CD14-positive monocyte (primary cell): ENCODE measurements at regions of chr13 and their contacts with region 1.

Region 1: GRCh38 chr13:50284540-50284939 is 269.3 kb downstream of the KCNRG start:
- DNase-seq: peak; percentile 46 to 70 (median 53)
- H3K4me3 ChIP-seq: peak overlapping the region in 1 of 3 experiments; percentile 29
- H3K4me3 Mint-ChIP-seq: peak overlapping the region in 1 of 2 donors; percentile 21
- H3K27ac ChIP-seq: peak overlapping the region in 1 of 2 donors; percentile 68
- H3K27ac Mint-ChIP-seq: peak overlapping the region; percentile 75 to 91 (median 90)
- H3K4me1 ChIP-seq: peaks cover 48 to 53% of the 10 kb centered on the region in 2 donors
- H3K4me1 Mint-ChIP-seq: peaks cover 56% of the 10 kb centered on the region
- H3K27me3 ChIP-seq: no peaks in the 10 kb centered on the region
- H3K27me3 Mint-ChIP-seq: no peaks in the 10 kb centered on the region
- CTCF ChIP-seq: no peak

Region 2: DNA sequence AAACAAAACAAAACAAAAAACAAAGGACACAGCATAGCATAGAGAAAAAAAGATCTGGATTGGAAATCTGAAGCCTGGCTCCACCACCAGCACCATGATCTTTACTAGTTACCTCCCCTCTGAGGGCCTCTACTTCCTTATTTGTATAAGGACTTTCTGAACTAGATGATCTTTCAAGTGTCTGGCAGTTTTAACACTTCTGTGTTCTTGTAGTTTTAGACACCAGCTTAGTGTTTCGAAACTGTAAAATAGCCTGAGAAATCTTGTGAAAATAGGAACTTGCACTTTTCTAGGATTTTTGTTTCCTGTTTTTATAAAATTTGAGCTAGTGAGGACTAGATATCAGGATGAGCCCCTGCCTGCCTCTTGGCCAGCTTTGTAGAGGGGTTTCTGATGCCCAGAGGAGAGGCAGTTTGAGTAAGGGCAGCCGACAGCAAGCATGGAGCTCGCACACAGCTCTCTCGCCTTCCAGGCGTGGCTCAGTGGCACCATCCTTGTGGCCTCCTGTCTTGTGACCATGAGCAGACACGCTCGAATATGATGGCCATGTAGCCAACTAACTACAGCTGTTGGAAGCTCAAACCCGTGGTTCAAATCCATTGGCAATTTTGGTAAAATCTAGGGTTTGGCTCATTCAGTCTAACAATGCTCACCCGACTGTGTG is 49.7 kb after region 1 on chr13:
- intact Hi-C with region 1: loop called in 1 of 2 experiments (anchors 10 kb)
- DNase-seq: peak; percentile 80 to 94 (median 87)
- H3K4me3 ChIP-seq: peak overlapping the region in 1 of 3 experiments; percentile 40
- H3K4me3 Mint-ChIP-seq: peak overlapping the region in 1 of 2 donors; percentile 42
- H3K27ac ChIP-seq: peak overlapping the region; percentile 69 to 78
- H3K27ac Mint-ChIP-seq: peak overlapping the region; percentile 86 to 93 (median 90)
- H3K4me1 ChIP-seq: peaks cover 39 to 42% of the 10 kb centered on the region in 2 donors
- H3K4me1 Mint-ChIP-seq: peaks cover 33% of the 10 kb centered on the region
- H3K27me3 ChIP-seq: no peaks in the 10 kb centered on the region
- H3K27me3 Mint-ChIP-seq: no peaks in the 10 kb centered on the region
- CTCF ChIP-seq: no peak

Region 3: DNA sequence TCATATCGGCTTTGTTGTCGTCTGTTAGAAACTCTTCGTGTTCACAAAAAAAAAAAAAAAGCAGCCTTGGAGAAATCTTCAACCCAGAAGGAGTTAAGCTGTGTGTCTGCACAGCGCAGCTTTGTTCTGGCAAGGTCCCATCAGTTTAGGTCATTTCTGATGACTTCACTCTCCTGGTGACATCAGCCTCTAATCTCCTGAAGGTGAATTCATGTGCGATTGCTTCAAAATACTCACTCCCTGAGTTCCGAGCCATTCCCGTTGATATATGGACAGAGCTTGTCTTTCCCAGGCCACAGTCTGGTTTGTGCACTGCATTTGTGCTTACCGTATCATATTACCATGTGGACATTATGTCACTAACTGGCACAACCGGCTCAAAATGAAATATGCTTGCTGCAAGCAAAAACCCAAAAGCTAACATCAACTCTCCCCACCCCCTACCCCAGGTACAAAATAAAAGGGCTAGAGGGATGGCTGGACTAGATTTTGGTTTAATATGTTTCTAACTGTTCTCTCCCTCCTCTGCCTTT is 73.1 kb after region 1 on chr13:
- intact Hi-C with region 1: no loop called
- DNase-seq: no peak
- H3K4me3 ChIP-seq: no peak overlapping the region
- H3K4me3 Mint-ChIP-seq: no peak overlapping the region
- H3K27ac ChIP-seq: no peak overlapping the region
- H3K27ac Mint-ChIP-seq: no peak overlapping the region
- H3K4me1 ChIP-seq: peaks cover 14 to 20% of the 10 kb centered on the region in 2 donors
- H3K4me1 Mint-ChIP-seq: peaks cover 38% of the 10 kb centered on the region
- H3K27me3 ChIP-seq: no peaks in the 10 kb centered on the region
- H3K27me3 Mint-ChIP-seq: peaks cover 0 to 2% (median 0%) of the 10 kb centered on the region in 3 donors
- CTCF ChIP-seq: no peak